ENCODE measurements at regions of chr4 and their contacts with region 1.

Region 1: GRCh38 chr4:1289207-1290164 is at the start of gene MAEA:
- DNase-seq: peak; percentile 98
- ATAC-seq: peak; percentile 96
- H3K4me3 Mint-ChIP-seq: peak within 1 kb of the TSS; percentile 88
- H3K27ac Mint-ChIP-seq: peak within 1 kb of the TSS; percentile 91
- H3K4me1 Mint-ChIP-seq: peaks cover 33% of the 10 kb centered on the region
- H3K27me3 Mint-ChIP-seq: no peaks in the 10 kb centered on the region
- total RNA-seq, gene MAEA: 63.9 to 70.0 TPM

Region 2: GRCh38 chr4:1130316-1131186 is 158.9 kb before region 1 on chr4:
- CTCF ChIA-PET with region 1: interaction called, 21 read pairs
- DNase-seq: peak; percentile 84
- ATAC-seq: peak; percentile 98
- H3K4me3 Mint-ChIP-seq: no peak overlapping the region
- H3K27ac Mint-ChIP-seq: no peak overlapping the region
- H3K4me1 Mint-ChIP-seq: peaks cover 4% of the 10 kb centered on the region
- H3K27me3 Mint-ChIP-seq: peaks cover 15% of the 10 kb centered on the region

Region 3: DNA sequence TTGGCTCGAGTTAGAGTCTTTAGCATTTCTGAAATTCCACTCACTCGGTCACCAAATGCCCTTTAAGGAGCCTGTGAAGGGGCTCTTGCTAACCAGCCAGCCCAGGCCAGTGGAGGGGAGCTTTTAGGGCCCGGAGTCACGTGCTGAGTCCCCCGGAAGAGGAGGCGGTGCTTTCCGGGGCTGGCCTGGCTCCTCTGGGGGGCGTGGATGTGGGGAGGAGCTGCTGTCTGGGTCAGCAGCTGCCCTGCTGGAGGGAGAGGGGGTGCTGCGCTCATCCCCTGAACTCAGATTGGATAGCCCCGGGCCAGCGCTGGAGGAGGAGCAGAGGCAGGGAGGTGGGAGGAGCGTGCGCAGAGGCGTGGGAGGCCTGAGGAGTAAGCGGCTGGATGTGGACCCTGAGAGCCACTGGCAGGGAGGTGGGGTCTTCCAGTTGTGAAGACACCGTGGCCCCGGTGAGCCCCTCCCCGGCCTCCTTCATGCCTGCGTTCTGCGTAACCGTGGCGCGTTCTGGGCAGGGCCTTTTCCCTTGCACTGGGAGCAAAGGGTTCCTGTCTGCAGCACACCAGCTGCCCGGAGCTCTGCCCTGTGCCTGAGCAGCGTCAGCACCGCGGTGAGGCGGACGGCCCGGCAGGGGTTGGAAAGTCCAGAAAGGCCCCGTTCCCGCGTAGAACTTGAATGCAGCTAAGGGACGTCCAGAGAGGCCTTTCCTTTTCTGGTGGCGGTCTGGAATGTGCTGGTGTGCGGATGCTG is 19.9 kb after region 1 on chr4:
- CTCF ChIA-PET with region 1: interaction called, 11 read pairs
- DNase-seq: peak; percentile 82
- ATAC-seq: peak; percentile 85
- H3K4me3 Mint-ChIP-seq: peak overlapping the region; percentile 61
- H3K27ac Mint-ChIP-seq: peak overlapping the region; percentile 77
- H3K4me1 Mint-ChIP-seq: peaks cover 71% of the 10 kb centered on the region
- H3K27me3 Mint-ChIP-seq: no peaks in the 10 kb centered on the region

Region 4: GRCh38 chr4:1346781-1347409 is 57.4 kb after region 1 on chr4 and contains the start of gene UVSSA:
- CTCF ChIA-PET with region 1: interaction called, 15 read pairs
- DNase-seq: peak; percentile 100
- ATAC-seq: peak; percentile 93
- H3K4me3 Mint-ChIP-seq: peak within 1 kb of the TSS; percentile 85
- H3K27ac Mint-ChIP-seq: peak within 1 kb of the TSS; percentile 96
- H3K4me1 Mint-ChIP-seq: peaks cover 36% of the 10 kb centered on the region
- H3K27me3 Mint-ChIP-seq: no peaks in the 10 kb centered on the region
- total RNA-seq, gene UVSSA: 18.2 to 25.2 TPM